Gastrocnemius medialis (tissue), 4 donors: ENCODE measurements at regions of chr14 and their contacts with region 1.

Region 1: GRCh38 chr14:35285168-35286002 is 6.8 kb upstream of the PSMA6 start:
- DNase-seq: no peak
- ATAC-seq: no peak
- H3K4me3 ChIP-seq: no peak overlapping the region
- H3K27ac ChIP-seq: peak overlapping the region in 2 of 4 donors; percentile 4 to 18
- H3K4me1 ChIP-seq: no peaks in the 10 kb centered on the region
- H3K27me3 ChIP-seq: no peaks in the 10 kb centered on the region
- CTCF ChIP-seq: no peak
- POLR2A ChIP-seq: no peak

Region 2: DNA sequence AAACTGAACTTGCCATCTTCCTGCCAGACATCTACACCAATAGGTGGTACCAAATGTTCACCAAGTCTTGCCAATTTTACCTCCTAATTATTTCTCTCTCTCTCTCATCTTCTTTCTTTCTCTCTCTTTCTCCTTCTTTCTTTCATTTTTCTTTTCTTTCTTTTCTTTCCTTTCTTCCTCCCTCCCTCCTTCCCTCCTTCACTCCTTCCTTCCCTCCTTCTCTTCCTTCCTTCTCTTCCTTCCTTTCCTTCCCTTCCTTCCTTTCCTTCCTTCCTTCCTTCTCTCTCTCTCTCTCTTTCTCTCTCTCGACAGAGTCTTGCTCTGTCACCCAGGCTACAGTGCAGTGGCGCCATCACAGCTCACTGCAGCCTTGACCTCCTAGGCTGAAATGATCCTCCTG is 48.6 kb before region 1 on chr14:
- in situ Hi-C with region 1: no loop called
- intact Hi-C with region 1: loop called (anchors 1 kb)
- DNase-seq: no peak
- ATAC-seq: no peak
- H3K4me3 ChIP-seq: no peak overlapping the region
- H3K27ac ChIP-seq: no peak overlapping the region
- H3K4me1 ChIP-seq: no peaks in the 10 kb centered on the region
- H3K27me3 ChIP-seq: no peaks in the 10 kb centered on the region
- CTCF ChIP-seq: no peak
- POLR2A ChIP-seq: no peak

Region 3: GRCh38 chr14:35480128-35480769 is 194.9 kb after region 1 on chr14:
- in situ Hi-C with region 1: no loop called
- intact Hi-C with region 1: no loop called
- DNase-seq: no peak
- ATAC-seq: no peak
- H3K4me3 ChIP-seq: no peak overlapping the region
- H3K27ac ChIP-seq: no peak overlapping the region
- H3K4me1 ChIP-seq: no peaks in the 10 kb centered on the region
- H3K27me3 ChIP-seq: peaks cover 0 to 4% (median 0%) of the 10 kb centered on the region in 3 donors
- CTCF ChIP-seq: no peak
- POLR2A ChIP-seq: no peak